Heart left ventricle (tissue), 16 donors: ENCODE measurements at regions of chr6 and their contacts with region 1.

Region 1: DNA sequence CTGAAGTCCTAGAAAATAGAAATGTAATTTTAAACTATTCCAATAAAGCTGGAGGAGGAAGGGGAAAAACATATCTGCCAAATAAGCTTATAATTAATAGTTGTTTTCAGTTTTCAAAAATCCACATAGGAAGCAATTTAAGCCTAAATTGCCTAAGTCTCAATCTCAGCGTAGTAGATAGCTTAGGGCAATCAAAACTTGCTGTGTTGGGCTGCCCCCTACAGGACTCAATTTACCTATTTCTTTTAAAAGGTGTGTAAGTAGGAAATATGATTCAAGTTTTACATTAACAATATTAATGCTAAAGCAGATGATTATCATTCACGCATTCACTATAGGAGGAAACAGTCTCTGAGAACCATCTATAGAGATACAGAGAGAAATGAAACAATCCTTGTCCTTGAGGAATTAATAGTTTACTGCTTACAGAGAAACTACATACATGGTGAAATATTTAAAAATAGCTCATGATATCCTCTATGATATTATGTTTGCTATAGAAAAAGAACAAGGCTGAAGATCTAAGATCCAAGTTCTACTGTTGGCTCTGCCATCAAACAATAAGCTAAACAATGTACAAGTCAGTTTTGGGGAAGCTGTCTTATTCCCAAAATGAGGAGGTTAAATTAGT is 102.1 kb downstream of the ATG5 start:
- DNase-seq: peak in 3 of 5 donors; percentile 35 to 60 (median 51)
- ATAC-seq: peak in 3 of 4 donors; percentile 61 to 73 (median 71)
- H3K4me3 ChIP-seq: no peak overlapping the region
- H3K27ac ChIP-seq: no peak overlapping the region
- H3K4me1 ChIP-seq: peaks cover 0 to 7% (median 0%) of the 10 kb centered on the region in 12 donors
- H3K27me3 ChIP-seq: no peaks in the 10 kb centered on the region
- CTCF ChIP-seq: peak; percentile 44 to 75 (median 66)
- POLR2A ChIP-seq: no peak

Region 2: GRCh38 chr6:105431226-105431625 is 792.2 kb before region 1 on chr6:
- intact Hi-C with region 1: loop called in 6 of 10 experiments (anchors 1 to 10 kb)
- DNase-seq: no peak
- ATAC-seq: no peak
- H3K4me3 ChIP-seq: no peak overlapping the region
- H3K27ac ChIP-seq: no peak overlapping the region
- H3K4me1 ChIP-seq: peaks cover 0 to 9% (median 0%) of the 10 kb centered on the region in 12 donors
- H3K27me3 ChIP-seq: peaks cover 0 to 6% (median 0%) of the 10 kb centered on the region in 9 donors
- CTCF ChIP-seq: peak; percentile 37 to 71 (median 56)
- POLR2A ChIP-seq: no peak

Region 3: GRCh38 chr6:105733565-105734162 is 489.8 kb before region 1 on chr6:
- intact Hi-C with region 1: loop called in 7 of 10 experiments (anchors 1 to 10 kb)
- DNase-seq: no peak
- ATAC-seq: no peak
- H3K4me3 ChIP-seq: no peak overlapping the region
- H3K27ac ChIP-seq: no peak overlapping the region
- H3K4me1 ChIP-seq: peaks cover 0 to 4% (median 0%) of the 10 kb centered on the region in 12 donors
- H3K27me3 ChIP-seq: no peaks in the 10 kb centered on the region
- CTCF ChIP-seq: peak; percentile 51 to 78 (median 60)
- POLR2A ChIP-seq: no peak

Region 4: GRCh38 chr6:105748737-105749161 is 474.7 kb before region 1 on chr6:
- intact Hi-C with region 1: loop called in 1 of 10 experiments (anchors 10 kb)
- DNase-seq: no peak
- ATAC-seq: no peak
- H3K4me3 ChIP-seq: no peak overlapping the region
- H3K27ac ChIP-seq: no peak overlapping the region
- H3K4me1 ChIP-seq: peaks cover 0 to 12% (median 0%) of the 10 kb centered on the region in 12 donors
- H3K27me3 ChIP-seq: peaks cover 0 to 3% (median 0%) of the 10 kb centered on the region in 9 donors
- CTCF ChIP-seq: no peak
- POLR2A ChIP-seq: no peak

Region 5: DNA sequence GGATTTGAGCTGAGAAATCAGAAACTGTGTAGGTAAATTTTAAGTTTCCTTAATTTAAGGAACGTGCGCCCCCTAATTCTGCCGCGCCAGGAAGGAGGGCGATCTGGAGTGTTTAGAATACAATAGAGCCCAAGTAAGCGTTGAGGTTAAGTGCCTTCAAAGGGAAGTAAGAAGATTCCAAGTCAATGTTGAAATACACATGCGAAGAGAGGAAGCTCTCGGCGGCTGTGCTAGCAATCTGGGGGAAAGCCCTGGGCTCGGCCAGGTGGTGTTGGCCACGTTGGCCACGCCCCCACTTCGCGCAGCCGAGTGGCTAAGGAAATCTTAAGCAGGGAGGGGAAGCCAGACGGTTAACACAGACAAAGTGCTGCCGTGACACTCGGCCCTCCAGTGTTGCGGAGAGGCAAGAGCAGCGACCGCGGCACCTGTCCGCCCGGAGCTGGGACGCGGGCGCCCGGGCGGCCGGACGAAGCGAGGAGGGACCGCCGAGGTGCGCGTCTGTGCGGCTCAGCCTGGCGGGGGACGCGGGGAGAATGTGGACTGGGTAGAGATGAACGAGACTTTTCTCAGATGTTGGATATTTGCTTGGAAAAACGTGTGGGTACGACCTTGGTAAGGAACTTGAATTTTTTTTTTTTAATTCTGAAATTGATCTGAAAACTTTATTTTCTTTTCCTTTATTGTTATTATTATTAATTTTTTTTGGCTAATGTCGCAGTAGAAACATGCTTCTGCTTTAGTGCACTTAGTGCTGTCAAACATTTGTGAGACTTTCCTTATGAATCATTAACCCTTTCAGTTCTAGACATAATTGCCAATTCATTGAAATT is 137.2 kb before region 1 on chr6 and contains the start of gene PRDM1:
- intact Hi-C with region 1: loop called in 3 of 10 experiments (anchors 5 to 10 kb)
- DNase-seq: peak; percentile 66 to 89 (median 81)
- ATAC-seq: peak; percentile 49 to 82 (median 76)
- H3K4me3 ChIP-seq: peak within 1 kb of the TSS; percentile 12 to 66 (median 52)
- H3K27ac ChIP-seq: peak within 1 kb of the TSS; percentile 8 to 87 (median 58)
- H3K4me1 ChIP-seq: peaks cover 0 to 76% (median 7%) of the 10 kb centered on the region in 12 donors
- H3K27me3 ChIP-seq: peaks cover 0 to 62% (median 12%) of the 10 kb centered on the region in 9 donors
- CTCF ChIP-seq: peak in 6 of 12 donors; percentile 3 to 20 (median 14)
- POLR2A ChIP-seq: peak in 1 of 2 donors; percentile 38
- total RNA-seq, gene PRDM1: 1.0 to 10.8 (median 1.7) TPM

Region 6: GRCh38 chr6:106844930-106845329 is 621.5 kb after region 1 on chr6:
- intact Hi-C with region 1: no loop called
- DNase-seq: no peak
- ATAC-seq: no peak
- H3K4me3 ChIP-seq: no peak overlapping the region
- H3K27ac ChIP-seq: no peak overlapping the region
- H3K4me1 ChIP-seq: no peaks in the 10 kb centered on the region
- H3K27me3 ChIP-seq: peaks cover 0 to 4% (median 0%) of the 10 kb centered on the region in 9 donors
- CTCF ChIP-seq: no peak
- POLR2A ChIP-seq: no peak